ENCODE measurements at regions of chr1 and their contacts with region 1.

Region 1: DNA sequence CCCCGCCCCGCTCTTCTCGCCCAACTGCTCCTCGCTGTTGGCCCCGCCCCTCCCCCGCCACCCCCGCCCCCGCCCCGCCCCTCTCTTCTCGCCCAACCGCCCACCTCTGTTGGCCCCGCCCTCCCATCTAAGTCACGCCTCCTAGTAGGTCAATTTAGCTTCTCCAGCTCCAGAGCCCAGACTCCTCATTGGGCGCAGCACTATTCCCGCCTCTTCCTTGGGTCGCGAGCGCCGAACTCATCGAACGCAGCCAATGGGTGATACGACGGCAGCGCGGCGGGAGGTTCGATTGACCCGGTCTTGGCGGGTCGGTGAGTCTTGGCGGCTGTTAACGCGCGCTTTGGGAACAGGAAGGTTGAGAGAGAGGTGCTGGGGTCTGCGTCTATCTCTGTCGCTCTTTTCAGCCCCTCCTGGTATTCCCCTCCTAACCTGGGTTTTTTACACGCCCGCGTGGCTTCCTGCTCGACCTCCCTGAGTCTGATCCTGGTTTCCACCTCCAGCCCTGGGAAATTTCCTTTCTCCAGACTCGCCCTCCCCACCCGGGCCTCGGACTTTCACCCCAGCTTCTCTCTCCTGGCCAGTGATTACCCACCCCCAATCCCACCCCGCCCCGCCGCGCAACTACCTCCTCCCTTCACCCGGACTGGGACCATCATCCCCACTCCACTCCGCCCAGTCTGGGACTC is at the start of gene RAD54L:
- DNase-seq: peak; percentile 94 to 98
- ATAC-seq: peak; percentile 93 to 95
- H3K4me3 ChIP-seq: peak within 1 kb of the TSS; percentile 80
- H3K27ac ChIP-seq: peak within 1 kb of the TSS; percentile 75 to 91
- H3K4me1 ChIP-seq: peaks cover 12% of the 10 kb centered on the region
- CTCF ChIP-seq: no peak
- EP300 ChIP-seq: no peak
- POLR2A ChIP-seq: peak; percentile 28; the same call in 1 of the 2 replicates
- RAD21 ChIP-seq: no peak
- polyA plus RNA-seq, gene RAD54L: 10.0 and 10.9 TPM in 2 replicates

Region 2: DNA sequence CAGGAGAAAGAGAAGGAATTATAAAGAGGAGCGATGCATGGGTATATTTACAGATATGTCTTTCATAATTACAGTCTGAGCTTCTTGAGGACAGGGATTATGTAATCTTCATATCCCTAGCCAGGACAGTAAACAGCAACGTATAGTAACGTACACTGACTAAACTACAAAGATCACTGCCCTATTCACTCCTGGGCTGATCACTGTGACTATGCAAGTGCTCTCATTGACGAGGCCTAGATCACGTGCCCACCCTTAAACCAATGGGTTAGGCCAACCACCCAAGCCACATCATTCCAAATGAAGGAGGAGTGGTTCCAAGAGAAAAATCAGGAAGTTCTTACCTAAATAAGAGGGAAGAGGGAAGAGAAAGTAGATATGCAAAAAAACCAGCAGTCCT is 133.6 kb before region 1 on chr1:
- CTCF ChIA-PET with region 1: no interaction called
- POLR2A ChIA-PET with region 1: no interaction called
- DNase-seq: no peak
- ATAC-seq: no peak
- H3K4me3 ChIP-seq: no peak overlapping the region
- H3K27ac ChIP-seq: no peak overlapping the region
- H3K4me1 ChIP-seq: no peaks in the 10 kb centered on the region
- CTCF ChIP-seq: no peak
- EP300 ChIP-seq: no peak
- POLR2A ChIP-seq: no peak
- RAD21 ChIP-seq: no peak

Region 3: DNA sequence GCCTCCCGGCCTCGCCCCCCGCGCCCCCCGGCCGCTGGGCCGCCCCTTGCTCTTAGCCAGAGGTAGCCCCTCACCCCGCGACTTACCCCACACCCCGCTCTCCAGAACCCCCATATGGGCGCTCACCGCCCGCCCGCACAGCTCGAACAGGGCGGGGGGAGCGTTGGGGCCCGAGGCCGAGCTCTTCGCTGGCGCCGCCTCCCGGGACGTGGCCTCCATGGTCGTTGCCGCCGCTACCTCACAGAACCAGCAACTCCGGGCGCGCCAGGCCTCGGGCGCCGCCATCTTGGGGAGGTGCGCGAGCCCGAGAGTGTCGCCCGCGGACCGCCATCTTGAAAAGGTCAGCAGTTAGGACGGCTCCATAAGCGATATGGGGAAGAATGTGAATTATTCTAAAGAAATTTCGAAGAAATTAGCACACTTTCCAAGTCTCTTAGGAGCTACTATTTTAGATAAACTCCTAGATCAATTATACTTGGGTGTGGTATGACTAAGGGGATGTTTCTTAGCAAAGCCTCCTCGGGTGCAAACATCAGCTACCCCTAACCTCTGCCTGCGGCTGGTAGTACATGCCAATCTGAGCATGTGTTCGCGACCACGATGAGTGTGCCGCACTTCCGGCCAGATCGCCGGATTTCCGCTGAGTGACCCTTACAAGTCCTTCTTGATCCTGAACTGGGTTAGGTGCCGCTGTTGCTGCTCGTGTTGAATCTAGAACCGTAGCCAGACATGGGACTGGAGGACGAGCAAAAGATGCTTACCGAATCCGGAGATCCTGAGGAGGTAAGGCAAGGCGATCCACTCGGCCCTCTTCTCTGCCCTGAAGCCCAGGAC is 55.7 kb after region 1 on chr1 and contains the starts of genes LRRC41 and UQCRH:
- CTCF ChIA-PET with region 1: no interaction called
- POLR2A ChIA-PET with region 1: interaction called, 10 read pairs
- DNase-seq: peak; percentile 79 to 98
- ATAC-seq: peak; percentile 87 to 91
- H3K4me3 ChIP-seq: peak within 1 kb of the TSS; percentile 84
- H3K27ac ChIP-seq: peak within 1 kb of the TSS; percentile 98 to 99
- H3K4me1 ChIP-seq: peaks cover 28% of the 10 kb centered on the region; the same call in 2 of the 3 replicates
- CTCF ChIP-seq: no peak
- EP300 ChIP-seq: no peak
- POLR2A ChIP-seq: peak; percentile 83
- RAD21 ChIP-seq: no peak
- polyA plus RNA-seq, gene LRRC41: 28.6 and 32.5 TPM in 2 replicates
- polyA plus RNA-seq, gene UQCRH: 514 and 762 TPM in 2 replicates